ENCODE measurements at regions of chr11 and their contacts with region 1.

Region 1: DNA sequence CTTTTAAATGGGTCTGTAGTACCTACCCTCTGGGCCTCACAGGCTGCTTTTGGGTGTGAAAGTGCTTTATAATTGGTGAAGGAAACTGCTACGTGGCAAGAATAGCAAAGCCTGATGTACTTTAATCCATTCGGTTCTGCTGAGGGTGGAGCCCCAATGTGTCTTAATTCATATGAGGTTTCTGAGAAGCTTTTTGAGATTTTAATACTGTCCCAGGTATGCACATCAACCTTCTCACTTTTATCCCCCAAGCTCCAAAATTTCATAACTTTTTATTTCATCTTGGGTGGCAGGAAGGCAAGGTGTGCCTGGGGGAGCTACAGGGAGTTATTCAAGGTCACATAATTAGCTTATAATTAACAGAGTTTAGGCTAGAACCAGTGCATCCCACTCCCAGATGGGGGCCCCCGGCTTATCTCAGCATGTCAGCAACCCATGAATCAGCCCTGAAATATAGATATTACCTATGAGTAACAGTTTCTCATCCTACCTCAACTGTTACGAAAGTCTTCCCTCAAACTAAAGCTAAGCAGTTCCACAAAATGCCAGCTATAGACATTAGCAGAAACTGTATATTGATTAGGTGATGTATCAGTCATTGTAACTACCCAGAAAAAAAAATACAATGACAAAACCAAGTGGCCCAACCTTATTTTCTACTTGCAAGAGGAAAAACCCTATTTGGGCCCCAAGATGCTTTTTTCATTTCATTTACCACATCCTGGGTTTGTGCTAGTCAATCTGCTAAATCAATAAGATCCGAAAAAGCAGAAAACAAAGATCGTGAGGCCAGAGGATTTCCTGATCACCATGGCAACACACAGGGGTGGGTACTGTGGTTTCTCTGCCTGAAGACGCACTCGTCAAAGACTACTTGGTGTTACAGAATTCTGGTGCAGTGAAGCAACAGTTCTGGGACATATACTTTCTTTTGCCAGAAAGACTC is 26.7 kb downstream of the CD44 start:
- DNase-seq: peak; percentile 95
- ATAC-seq: peak; percentile 73
- H3K4me3 ChIP-seq: peak overlapping the region in 4 of 5 experiments; percentile 20 to 57 (median 35)
- H3K4me3 Mint-ChIP-seq: peak overlapping the region; percentile 86
- H3K27ac ChIP-seq: peak overlapping the region; percentile 96 to 98
- H3K27ac Mint-ChIP-seq: peak overlapping the region; percentile 97
- H3K4me1 ChIP-seq: peaks cover 97 to 98% of the 10 kb centered on the region in 2 donors
- H3K4me1 Mint-ChIP-seq: peaks cover 100% of the 10 kb centered on the region
- H3K27me3 ChIP-seq: no peaks in the 10 kb centered on the region
- H3K27me3 Mint-ChIP-seq: no peaks in the 10 kb centered on the region
- CTCF ChIP-seq: no peak

Region 2: DNA sequence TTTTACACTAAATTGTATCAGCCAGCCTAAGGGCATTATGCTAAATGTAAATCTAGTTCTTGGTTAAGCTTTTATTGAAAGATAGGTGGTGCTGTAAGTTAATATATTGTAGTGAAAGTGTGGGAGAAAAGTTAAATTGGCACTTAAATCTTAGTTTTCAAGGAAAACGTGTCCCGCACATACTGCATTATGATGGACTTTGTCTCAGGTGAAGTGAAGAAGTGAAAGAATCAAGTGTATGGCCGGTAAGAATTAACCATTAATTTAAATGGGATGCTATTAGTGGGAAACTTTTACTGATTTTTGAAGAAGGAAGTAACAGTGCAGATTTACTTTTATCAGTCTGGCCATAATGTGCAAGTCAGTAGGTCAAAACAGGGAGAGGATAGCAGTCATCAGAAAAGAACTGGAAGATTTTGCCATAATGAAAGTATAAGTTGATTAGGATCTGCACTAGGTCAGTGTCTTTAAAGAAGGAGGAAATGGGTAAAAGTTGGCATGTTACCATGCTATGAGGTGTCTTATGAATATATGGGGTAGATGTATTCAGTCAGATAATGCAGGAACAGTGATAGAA is 167.7 kb before region 1 on chr11:
- CTCF ChIA-PET with region 1: interaction called, 59 read pairs
- POLR2A ChIA-PET with region 1: no interaction called
- intact Hi-C with region 1: loop called (anchors 1 kb)
- DNase-seq: peak; percentile 63
- ATAC-seq: peak; percentile 56
- H3K4me3 ChIP-seq: peak overlapping the region in 2 of 5 experiments; percentile 2 to 31
- H3K4me3 Mint-ChIP-seq: peak overlapping the region; percentile 59
- H3K27ac ChIP-seq: peak overlapping the region in 1 of 2 donors; percentile 4
- H3K27ac Mint-ChIP-seq: peak overlapping the region; percentile 71
- H3K4me1 ChIP-seq: peaks cover 11 to 16% of the 10 kb centered on the region in 2 donors
- H3K4me1 Mint-ChIP-seq: peaks cover 27% of the 10 kb centered on the region
- H3K27me3 ChIP-seq: no peaks in the 10 kb centered on the region
- H3K27me3 Mint-ChIP-seq: no peaks in the 10 kb centered on the region
- CTCF ChIP-seq: peak; percentile 93

Region 3: GRCh38 chr11:35082321-35083182 is 83.1 kb before region 1 on chr11:
- CTCF ChIA-PET with region 1: interaction called, 7 read pairs
- POLR2A ChIA-PET with region 1: interaction called, 4 read pairs
- intact Hi-C with region 1: loop called (anchors 1 kb)
- DNase-seq: peak; percentile 91
- ATAC-seq: peak; percentile 63
- H3K4me3 ChIP-seq: peak overlapping the region in 3 of 5 experiments; percentile 29 to 55 (median 34)
- H3K4me3 Mint-ChIP-seq: peak overlapping the region; percentile 80
- H3K27ac ChIP-seq: peak overlapping the region; percentile 96
- H3K27ac Mint-ChIP-seq: peak overlapping the region; percentile 98
- H3K4me1 ChIP-seq: peaks cover 66 to 71% of the 10 kb centered on the region in 2 donors
- H3K4me1 Mint-ChIP-seq: peaks cover 85% of the 10 kb centered on the region
- H3K27me3 ChIP-seq: no peaks in the 10 kb centered on the region
- H3K27me3 Mint-ChIP-seq: no peaks in the 10 kb centered on the region
- CTCF ChIP-seq: no peak

Region 4: DNA sequence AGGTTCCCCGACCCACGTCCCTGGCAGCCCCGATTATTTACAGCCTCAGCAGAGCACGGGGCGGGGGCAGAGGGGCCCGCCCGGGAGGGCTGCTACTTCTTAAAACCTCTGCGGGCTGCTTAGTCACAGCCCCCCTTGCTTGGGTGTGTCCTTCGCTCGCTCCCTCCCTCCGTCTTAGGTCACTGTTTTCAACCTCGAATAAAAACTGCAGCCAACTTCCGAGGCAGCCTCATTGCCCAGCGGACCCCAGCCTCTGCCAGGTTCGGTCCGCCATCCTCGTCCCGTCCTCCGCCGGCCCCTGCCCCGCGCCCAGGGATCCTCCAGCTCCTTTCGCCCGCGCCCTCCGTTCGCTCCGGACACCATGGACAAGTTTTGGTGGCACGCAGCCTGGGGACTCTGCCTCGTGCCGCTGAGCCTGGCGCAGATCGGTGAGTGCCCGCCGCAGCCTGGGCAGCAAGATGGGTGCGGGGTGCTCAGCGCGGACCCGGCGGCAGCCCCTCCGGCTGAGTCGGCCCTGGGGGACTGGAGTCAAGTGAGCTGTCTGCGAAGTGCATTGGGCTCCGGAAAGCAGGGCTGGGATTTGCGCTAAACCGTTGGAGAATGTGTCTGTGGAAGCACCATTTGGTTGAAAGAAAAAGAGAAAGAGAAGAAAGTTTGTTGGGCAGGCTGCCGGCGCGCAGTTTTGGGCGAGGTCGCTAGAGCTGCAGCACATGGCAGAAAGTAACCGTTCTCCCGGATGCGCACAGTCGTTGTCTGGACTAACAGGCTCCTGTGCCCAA is 26.6 kb before region 1 on chr11 and contains the start of gene CD44:
- CTCF ChIA-PET with region 1: interaction called, 48 read pairs
- POLR2A ChIA-PET with region 1: interaction called, 7 read pairs
- intact Hi-C with region 1: loop called (anchors 1 kb)
- DNase-seq: peak; percentile 90
- ATAC-seq: peak; percentile 78
- H3K4me3 ChIP-seq: peak within 1 kb of the TSS; percentile 80 to 90 (median 89)
- H3K4me3 Mint-ChIP-seq: peak within 1 kb of the TSS; percentile 96
- H3K27ac ChIP-seq: peak within 1 kb of the TSS; percentile 88 to 94
- H3K27ac Mint-ChIP-seq: peak within 1 kb of the TSS; percentile 99
- H3K4me1 ChIP-seq: peaks cover 44 to 55% of the 10 kb centered on the region in 2 donors
- H3K4me1 Mint-ChIP-seq: peaks cover 48% of the 10 kb centered on the region
- H3K27me3 ChIP-seq: no peaks in the 10 kb centered on the region
- H3K27me3 Mint-ChIP-seq: no peaks in the 10 kb centered on the region
- CTCF ChIP-seq: no peak
- total RNA-seq, gene CD44: 895 and 896 TPM in 2 replicates

Region 5: DNA sequence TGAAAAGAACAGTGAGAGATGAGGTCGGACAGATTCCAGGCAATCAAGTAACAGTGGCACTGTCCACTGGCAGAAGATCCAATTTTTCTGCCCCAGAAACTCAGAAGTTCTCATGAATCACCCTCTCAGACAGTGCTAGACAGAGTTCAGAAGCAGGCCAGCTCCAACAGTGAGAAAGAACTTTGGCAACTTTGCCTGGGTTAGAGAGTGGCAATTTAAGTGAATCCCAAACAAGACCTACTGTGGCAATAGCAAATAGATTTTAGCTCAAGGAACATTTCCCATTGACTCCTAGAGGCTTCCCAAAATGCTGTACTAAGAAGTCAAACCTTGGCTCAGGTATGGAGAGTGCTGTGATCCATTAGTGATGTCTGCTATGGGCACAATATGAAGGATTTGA is 14.5 kb before region 1 on chr11:
- CTCF ChIA-PET with region 1: interaction called, 16 read pairs
- POLR2A ChIA-PET with region 1: interaction called, 5 read pairs
- intact Hi-C with region 1: no loop called
- DNase-seq: no peak
- ATAC-seq: no peak
- H3K4me3 ChIP-seq: no peak overlapping the region
- H3K4me3 Mint-ChIP-seq: no peak overlapping the region
- H3K27ac ChIP-seq: peak overlapping the region in 1 of 2 donors; percentile 53
- H3K27ac Mint-ChIP-seq: peak overlapping the region; percentile 69
- H3K4me1 ChIP-seq: peaks cover 78 to 89% of the 10 kb centered on the region in 2 donors
- H3K4me1 Mint-ChIP-seq: peaks cover 93% of the 10 kb centered on the region
- H3K27me3 ChIP-seq: no peaks in the 10 kb centered on the region
- H3K27me3 Mint-ChIP-seq: no peaks in the 10 kb centered on the region
- CTCF ChIP-seq: no peak

Region 6: DNA sequence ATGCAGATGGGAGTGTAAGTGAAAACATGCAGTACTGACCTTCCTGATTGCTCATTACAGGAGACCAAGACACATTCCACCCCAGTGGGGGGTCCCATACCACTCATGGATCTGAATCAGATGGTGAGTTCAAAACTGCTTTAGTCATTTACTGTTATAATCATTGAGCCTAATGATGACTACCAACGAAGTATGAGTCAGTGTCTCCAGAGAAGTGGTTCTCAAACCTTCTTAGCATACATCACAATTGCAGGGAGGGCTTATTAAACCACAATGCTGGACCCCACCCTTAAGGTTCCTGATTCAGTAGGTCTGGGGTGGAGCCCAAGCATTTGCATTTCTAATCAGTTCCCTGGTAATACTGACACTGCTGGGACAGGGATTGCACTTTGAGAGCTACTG is 49.1 kb after region 1 on chr11:
- CTCF ChIA-PET with region 1: no interaction called
- POLR2A ChIA-PET with region 1: no interaction called
- intact Hi-C with region 1: loop called (anchors 10 kb)
- DNase-seq: no peak
- ATAC-seq: peak; percentile 46
- H3K4me3 ChIP-seq: no peak overlapping the region
- H3K4me3 Mint-ChIP-seq: peak overlapping the region; percentile 40
- H3K27ac ChIP-seq: peak overlapping the region in 1 of 2 donors; percentile 3
- H3K27ac Mint-ChIP-seq: peak overlapping the region; percentile 52
- H3K4me1 ChIP-seq: peaks cover 49 to 59% of the 10 kb centered on the region in 2 donors
- H3K4me1 Mint-ChIP-seq: peaks cover 70% of the 10 kb centered on the region
- H3K27me3 ChIP-seq: no peaks in the 10 kb centered on the region
- H3K27me3 Mint-ChIP-seq: no peaks in the 10 kb centered on the region
- CTCF ChIP-seq: no peak

Region 7: GRCh38 chr11:35313066-35313759 is 147.5 kb after region 1 on chr11:
- CTCF ChIA-PET with region 1: no interaction called
- POLR2A ChIA-PET with region 1: no interaction called
- intact Hi-C with region 1: loop called (anchors 5 kb)
- DNase-seq: peak; percentile 84
- ATAC-seq: peak; percentile 91
- H3K4me3 ChIP-seq: peak overlapping the region in 2 of 5 experiments; percentile 20 to 42
- H3K4me3 Mint-ChIP-seq: peak overlapping the region; percentile 63
- H3K27ac ChIP-seq: peak overlapping the region; percentile 92 to 93
- H3K27ac Mint-ChIP-seq: peak overlapping the region; percentile 86
- H3K4me1 ChIP-seq: peaks cover 43 to 61% of the 10 kb centered on the region in 2 donors
- H3K4me1 Mint-ChIP-seq: peaks cover 56% of the 10 kb centered on the region
- H3K27me3 ChIP-seq: no peaks in the 10 kb centered on the region
- H3K27me3 Mint-ChIP-seq: no peaks in the 10 kb centered on the region
- CTCF ChIP-seq: no peak

Region 8: GRCh38 chr11:35852056-35852455 is 686.4 kb after region 1 on chr11:
- CTCF ChIA-PET with region 1: no interaction called
- POLR2A ChIA-PET with region 1: no interaction called
- intact Hi-C with region 1: no loop called
- DNase-seq: no peak
- ATAC-seq: no peak
- H3K4me3 ChIP-seq: no peak overlapping the region
- H3K4me3 Mint-ChIP-seq: no peak overlapping the region
- H3K27ac ChIP-seq: no peak overlapping the region
- H3K27ac Mint-ChIP-seq: no peak overlapping the region
- H3K4me1 ChIP-seq: no peaks in the 10 kb centered on the region
- H3K4me1 Mint-ChIP-seq: no peaks in the 10 kb centered on the region
- H3K27me3 ChIP-seq: peaks cover 0 to 7% (median 0%) of the 10 kb centered on the region in 4 experiments
- H3K27me3 Mint-ChIP-seq: peaks cover 6% of the 10 kb centered on the region
- CTCF ChIP-seq: no peak